ENCODE measurements at regions of chr4 and their contacts with region 1.

Region 1: DNA sequence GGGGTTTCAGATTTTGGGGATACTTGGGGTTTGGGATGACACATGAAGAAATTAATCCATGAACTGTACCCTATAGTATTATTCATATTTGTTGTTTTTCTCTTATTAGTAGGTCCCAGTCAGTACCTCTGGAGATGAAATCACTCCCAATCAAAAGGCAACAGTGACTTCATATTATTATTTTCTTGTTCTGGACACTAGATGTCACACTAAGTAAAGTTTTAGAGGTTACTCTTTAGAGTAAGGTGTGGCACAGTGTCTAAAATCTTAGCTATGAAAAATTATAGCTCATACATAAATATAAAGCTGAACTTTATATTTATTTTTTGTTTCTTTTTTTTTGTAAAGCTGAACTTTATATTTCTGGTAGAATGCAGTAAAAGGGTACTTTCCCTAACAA is 35.1 kb downstream of the FAM114A1 start:
- DNase-seq: peak; percentile 64
- H3K4me3 ChIP-seq: no peak overlapping the region
- H3K27ac ChIP-seq: no peak overlapping the region
- H3K4me1 ChIP-seq: no peaks in the 10 kb centered on the region
- CTCF ChIP-seq: peak; percentile 85

Region 2: DNA sequence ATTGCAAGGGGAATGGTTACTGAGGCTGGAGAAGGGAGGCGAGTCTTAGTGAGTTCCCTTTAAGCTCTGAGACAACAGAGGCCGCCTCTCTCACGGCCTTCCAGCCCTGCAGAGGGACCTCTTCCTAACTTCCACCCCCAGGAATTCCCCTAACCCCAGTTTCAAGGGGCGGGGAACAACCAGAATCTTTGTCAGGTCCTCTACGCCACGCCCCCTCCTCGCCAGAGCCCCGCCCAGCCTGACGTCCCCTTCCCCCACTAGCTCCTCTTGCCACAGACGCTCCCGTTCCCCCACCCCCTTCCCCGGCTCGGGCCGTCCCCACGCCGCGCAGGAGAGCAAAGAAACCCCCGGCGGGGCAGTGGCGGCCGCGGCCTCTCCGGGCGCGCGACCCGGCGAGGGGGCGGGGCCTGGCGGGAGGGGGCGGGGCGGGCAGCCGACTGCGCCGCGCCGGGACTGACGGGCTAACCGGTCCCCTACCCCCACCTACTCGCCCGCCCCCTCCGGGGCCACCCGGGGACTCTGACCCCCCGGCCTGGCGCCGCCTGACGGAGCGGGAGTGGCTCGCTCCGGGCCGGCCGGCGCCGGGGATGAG is 141.8 kb after region 1 on chr4:
- CTCF ChIA-PET with region 1: no interaction called
- POLR2A ChIA-PET with region 1: interaction called, 3 read pairs
- intact Hi-C with region 1: loop called (anchors 5 kb)
- DNase-seq: peak; percentile 90
- H3K4me3 ChIP-seq: peak overlapping the region; percentile 75
- H3K27ac ChIP-seq: peak overlapping the region; percentile 60
- H3K4me1 ChIP-seq: peaks cover 57% of the 10 kb centered on the region
- CTCF ChIP-seq: no peak

Region 3: GRCh38 chr4:39181905-39182638 is 279.4 kb after region 1 on chr4 and contains the start of gene WDR19:
- CTCF ChIA-PET with region 1: no interaction called
- POLR2A ChIA-PET with region 1: interaction called, 4 read pairs
- intact Hi-C with region 1: loop called (anchors 5 kb)
- DNase-seq: peak; percentile 100
- H3K4me3 ChIP-seq: peak within 1 kb of the TSS; percentile 83
- H3K27ac ChIP-seq: peak within 1 kb of the TSS; percentile 55
- H3K4me1 ChIP-seq: peaks cover 17% of the 10 kb centered on the region
- CTCF ChIP-seq: peak; percentile 81
- total RNA-seq, gene WDR19: 40.5 and 41.2 TPM in 2 replicates

Region 4: GRCh38 chr4:39353478-39354253 is 451.0 kb after region 1 on chr4:
- CTCF ChIA-PET with region 1: no interaction called
- POLR2A ChIA-PET with region 1: no interaction called
- intact Hi-C with region 1: no loop called
- DNase-seq: peak; percentile 71
- H3K4me3 ChIP-seq: peak overlapping the region; percentile 64
- H3K27ac ChIP-seq: peak overlapping the region; percentile 93
- H3K4me1 ChIP-seq: peaks cover 68% of the 10 kb centered on the region
- CTCF ChIP-seq: no peak

Region 5: DNA sequence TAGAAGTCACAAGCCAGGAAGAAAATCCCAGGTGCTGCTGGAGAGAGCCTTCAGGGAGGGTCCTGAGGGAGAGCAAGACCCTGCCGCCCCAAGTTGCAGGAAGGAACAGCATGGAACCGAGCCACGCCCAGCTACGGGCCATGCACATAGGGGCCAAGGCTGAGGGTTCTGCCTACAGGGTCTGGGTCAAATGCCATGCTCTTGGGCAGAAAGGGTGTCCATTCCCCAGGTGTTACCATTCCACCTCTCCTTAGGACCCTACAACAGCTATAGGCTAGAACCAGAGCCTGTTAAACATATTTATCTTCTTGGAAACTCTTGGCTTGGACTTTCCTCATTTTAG is 533.5 kb after region 1 on chr4:
- CTCF ChIA-PET with region 1: no interaction called
- POLR2A ChIA-PET with region 1: no interaction called
- intact Hi-C with region 1: loop called (anchors 5 kb)
- DNase-seq: no peak
- H3K4me3 ChIP-seq: no peak overlapping the region
- H3K27ac ChIP-seq: no peak overlapping the region
- H3K4me1 ChIP-seq: no peaks in the 10 kb centered on the region
- CTCF ChIP-seq: no peak